Activated naive CD4-positive, alpha-beta T cell treated with anti-CD3 and anti-CD28 coated beads, Interleukin-2, amount 10 ng/mL, durations not matched to agents 7 days and 5 days (primary cell): ENCODE measurements at regions of chrX and their contacts with region 1.

Region 1: GRCh38 chrX:70433848-70434351 is 10.7 kb upstream of the DLG3 start:
- DNase-seq: peak; percentile 81
- H3K4me3 Mint-ChIP-seq: peak overlapping the region; percentile 84
- H3K27ac Mint-ChIP-seq: peak overlapping the region; percentile 88
- H3K4me1 Mint-ChIP-seq: peaks cover 27% of the 10 kb centered on the region
- H3K27me3 Mint-ChIP-seq: peaks cover 40% of the 10 kb centered on the region

Region 2: DNA sequence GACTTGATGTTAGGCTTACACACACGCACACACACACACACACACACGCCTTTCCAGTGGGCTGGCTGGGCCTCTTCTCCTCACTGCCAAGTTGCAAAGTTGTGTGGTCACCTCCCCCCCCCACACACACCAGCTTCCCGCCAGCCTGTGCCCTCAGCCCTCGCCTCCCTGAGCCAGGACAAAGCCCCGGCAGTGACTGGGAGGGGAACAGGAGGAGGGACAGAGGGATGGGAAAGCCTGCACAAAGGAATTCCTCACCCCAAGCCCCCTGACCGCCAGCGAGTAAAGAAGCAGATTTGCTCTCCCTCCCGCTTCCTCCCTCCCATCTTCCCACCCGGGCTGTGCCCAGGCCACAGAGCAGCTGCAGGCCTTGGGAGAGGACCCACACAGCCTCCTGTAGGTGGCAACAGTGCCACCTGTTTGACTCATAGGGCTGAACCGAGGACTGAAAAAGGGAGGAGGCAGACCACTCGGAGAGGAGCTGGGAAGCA is 11.0 kb before region 1 on chrX and contains the start of gene GDPD2:
- CTCF ChIA-PET with region 1: interaction called, 12 read pairs
- DNase-seq: no peak
- H3K4me3 Mint-ChIP-seq: no peak within 1 kb of the TSS
- H3K27ac Mint-ChIP-seq: no peak within 1 kb of the TSS
- H3K4me1 Mint-ChIP-seq: no peaks in the 10 kb centered on the region
- H3K27me3 Mint-ChIP-seq: no peaks in the 10 kb centered on the region